ENCODE measurements at regions of chrX and their contacts with region 1.

Region 1: DNA sequence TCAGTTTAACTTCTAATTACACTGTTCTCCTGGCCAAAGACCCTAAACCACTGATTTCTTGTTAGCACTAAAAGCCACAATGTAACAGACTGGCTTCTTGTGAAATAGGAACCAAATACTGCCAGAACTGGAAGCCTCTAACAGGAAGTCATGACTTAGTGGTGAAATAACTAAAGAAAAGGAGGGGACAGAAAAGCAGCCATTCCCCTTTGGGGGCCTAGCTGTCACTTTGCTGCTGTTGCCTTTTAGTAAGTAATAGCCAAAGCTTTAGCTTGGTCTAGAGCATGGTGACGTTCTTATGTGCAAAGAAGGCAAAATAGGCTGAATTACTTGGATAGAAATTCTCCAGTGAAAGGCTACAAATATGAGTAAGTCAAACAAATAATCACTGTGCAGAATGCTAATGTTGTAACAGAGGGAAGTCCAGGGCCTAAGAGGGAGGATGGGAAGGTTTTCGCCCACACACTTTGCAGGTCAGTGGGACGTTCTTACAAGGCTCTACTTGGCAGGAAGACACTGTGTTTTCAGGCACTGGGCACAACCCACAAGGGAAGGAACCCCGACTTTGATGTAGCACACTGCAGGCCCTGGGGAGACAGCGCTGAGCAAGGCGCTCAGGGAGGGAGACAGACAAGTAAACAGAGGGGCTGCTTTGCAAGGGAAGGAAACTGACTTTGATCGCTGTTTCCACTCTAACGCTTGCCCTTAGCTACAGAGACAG is 16.7 kb downstream of the GAB3 start:
- DNase-seq: peak; percentile 73
- H3K4me3 ChIP-seq: no peak overlapping the region
- H3K27ac ChIP-seq: peak overlapping the region; percentile 93
- H3K4me1 ChIP-seq: peaks cover 90% of the 10 kb centered on the region
- H3K27me3 ChIP-seq: no peaks in the 10 kb centered on the region
- CTCF ChIP-seq: no peak
- POLR2A ChIP-seq: no peak

Region 2: DNA sequence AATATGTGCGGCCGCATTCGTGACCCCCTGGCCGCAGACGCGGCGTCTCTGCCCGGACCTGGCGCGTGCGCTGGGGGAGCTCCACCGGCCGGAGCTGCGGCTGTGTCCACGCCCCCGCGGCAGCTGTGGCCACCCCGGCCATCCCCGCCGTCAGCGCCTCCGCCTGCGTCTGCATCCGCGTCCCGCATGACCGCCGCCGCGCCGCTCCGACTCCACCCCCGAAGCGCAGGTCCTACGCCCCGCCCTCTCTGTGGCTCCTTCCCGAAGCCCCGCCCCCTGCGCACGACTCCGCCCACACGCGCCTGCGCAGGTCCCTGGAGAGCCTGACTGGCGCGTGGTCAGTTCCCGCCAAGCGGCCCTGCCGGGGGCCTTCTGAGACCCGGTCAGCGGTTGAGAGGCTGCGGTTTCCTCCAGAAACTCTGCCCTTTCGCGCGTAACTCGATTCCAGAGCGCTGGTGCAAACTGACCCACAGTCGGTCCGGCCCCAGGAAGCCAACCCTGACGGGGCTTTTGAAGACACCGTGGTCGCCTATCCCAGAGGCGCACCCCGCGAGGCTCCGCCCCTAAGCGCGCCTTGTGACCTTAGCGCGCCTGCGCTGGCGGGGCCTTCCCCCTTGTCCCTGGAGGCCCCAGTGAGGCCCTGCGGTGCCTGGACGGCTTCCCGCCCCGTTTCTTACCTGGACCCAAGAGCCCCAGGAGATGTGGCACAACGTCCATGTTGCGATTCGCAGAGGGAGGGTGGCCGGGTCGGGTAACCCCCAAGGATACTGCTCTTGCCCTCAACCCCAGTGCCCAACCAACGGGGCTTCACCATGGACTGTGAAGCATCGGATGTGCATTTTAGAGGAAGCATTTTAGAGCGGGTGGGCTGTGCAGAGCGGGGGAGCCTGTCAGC is 255.2 kb before region 1 on chrX and contains the start of gene LAGE3:
- CTCF ChIA-PET with region 1: no interaction called
- POLR2A ChIA-PET with region 1: no interaction called
- dilution Hi-C with region 1: no loop called
- intact Hi-C with region 1: no loop called
- DNase-seq: peak; percentile 92
- H3K4me3 ChIP-seq: peak within 1 kb of the TSS; percentile 39 to 56 (median 48)
- H3K27ac ChIP-seq: peak within 1 kb of the TSS; percentile 41
- H3K4me1 ChIP-seq: peaks cover 9% of the 10 kb centered on the region
- H3K27me3 ChIP-seq: no peaks in the 10 kb centered on the region
- CTCF ChIP-seq: no peak
- POLR2A ChIP-seq: peak; percentile 25
- total RNA-seq, gene LAGE3: 14.3 and 17.8 TPM in 2 replicates

Region 3: GRCh38 chrX:154714925-154715324 is 19.3 kb before region 1 on chrX:
- CTCF ChIA-PET with region 1: interaction called, 10 read pairs
- POLR2A ChIA-PET with region 1: no interaction called
- dilution Hi-C with region 1: no loop called
- intact Hi-C with region 1: loop called (anchors 2 kb)
- DNase-seq: peak; percentile 62
- H3K4me3 ChIP-seq: no peak overlapping the region
- H3K27ac ChIP-seq: no peak overlapping the region
- H3K4me1 ChIP-seq: peaks cover 40% of the 10 kb centered on the region
- H3K27me3 ChIP-seq: no peaks in the 10 kb centered on the region
- CTCF ChIP-seq: peak; percentile 43 to 52
- POLR2A ChIP-seq: no peak

Region 4: GRCh38 chrX:154804957-154805695 is 70.9 kb after region 1 on chrX and contains the start of gene MPP1:
- CTCF ChIA-PET with region 1: no interaction called
- POLR2A ChIA-PET with region 1: no interaction called
- dilution Hi-C with region 1: no loop called
- intact Hi-C with region 1: loop called (anchors 2 kb)
- DNase-seq: peak; percentile 81
- H3K4me3 ChIP-seq: peak within 1 kb of the TSS; percentile 27 to 50 (median 50)
- H3K27ac ChIP-seq: peak within 1 kb of the TSS; percentile 7
- H3K4me1 ChIP-seq: peaks cover 31% of the 10 kb centered on the region
- H3K27me3 ChIP-seq: no peaks in the 10 kb centered on the region
- CTCF ChIP-seq: no peak
- POLR2A ChIP-seq: no peak
- total RNA-seq, gene MPP1: 27.0 and 32.3 TPM in 2 replicates